ENCODE measurements at regions of chr18 and their contacts with region 1.

Region 1: DNA sequence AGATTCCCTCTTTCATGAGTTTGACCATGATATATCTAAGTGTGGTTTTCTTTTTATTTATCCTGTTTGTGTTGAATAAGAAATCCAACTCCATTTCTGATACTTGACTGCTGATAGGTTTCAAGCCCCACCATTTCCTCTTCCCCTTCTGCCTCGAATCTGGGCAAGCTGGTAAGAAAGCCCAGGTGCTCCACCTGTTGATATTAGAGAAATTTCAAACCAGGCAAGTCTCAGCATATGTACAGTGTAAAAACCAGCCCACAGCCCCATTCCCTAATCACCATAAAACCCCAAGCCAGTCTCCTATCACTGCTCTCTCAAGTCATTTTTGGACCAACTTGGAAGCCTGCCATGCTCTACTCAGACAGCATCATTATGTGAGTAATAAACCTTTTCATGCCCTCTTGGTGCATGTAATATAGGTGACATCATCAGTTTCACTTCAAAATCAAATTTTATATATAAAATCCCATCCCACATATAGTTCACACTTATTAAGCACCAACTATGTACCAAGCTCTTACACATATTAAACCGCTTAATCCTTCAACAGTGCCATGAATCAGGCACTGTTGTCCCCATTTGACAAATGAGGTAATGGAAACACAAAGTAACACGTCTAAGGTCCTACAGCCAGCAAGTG is 46.6 kb downstream of the SMAD2 start:
- DNase-seq: peak; percentile 72
- ATAC-seq: peak; percentile 97
- H3K4me3 Mint-ChIP-seq: no peak overlapping the region
- H3K27ac Mint-ChIP-seq: peak overlapping the region; percentile 84
- H3K4me1 Mint-ChIP-seq: peaks cover 47% of the 10 kb centered on the region
- H3K27me3 Mint-ChIP-seq: no peaks in the 10 kb centered on the region

Region 2: DNA sequence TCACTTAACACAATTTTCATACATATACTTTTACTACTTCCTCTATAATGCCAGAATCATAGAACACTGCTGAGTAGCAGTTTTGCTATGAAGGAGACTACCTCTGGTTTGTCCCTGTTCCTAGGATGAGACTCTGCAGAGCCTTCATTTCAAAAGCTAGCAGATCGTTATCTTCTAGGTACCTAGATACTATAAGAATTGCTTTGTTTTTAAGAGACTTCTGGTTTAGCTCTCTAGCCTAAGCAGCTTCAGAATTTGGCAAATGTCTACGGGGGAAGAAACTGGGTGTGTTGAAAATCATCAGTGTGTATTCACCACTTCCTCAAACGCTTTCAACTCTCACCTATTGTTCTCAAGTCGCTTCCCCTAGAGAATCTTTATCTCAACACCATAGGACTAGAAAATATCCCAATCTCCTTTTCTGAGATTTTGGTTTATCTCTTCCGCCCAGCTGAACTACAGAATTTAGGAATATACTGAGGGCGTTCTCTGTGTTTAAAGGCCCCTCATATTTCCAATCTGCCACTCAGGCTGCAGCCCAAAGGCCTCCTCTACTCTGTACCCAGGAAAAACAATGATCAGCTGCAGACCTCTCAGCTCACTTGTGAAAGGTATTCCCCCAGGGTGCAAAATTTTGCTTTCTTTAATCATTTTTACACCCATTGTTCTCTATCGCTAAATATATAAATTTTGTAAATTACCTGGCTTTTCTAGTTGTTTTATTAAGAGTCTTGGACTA is 17.9 kb after region 1 on chr18:
- CTCF ChIA-PET with region 1: interaction called, 5 read pairs
- POLR2A ChIA-PET with region 1: no interaction called
- intact Hi-C with region 1: loop called in 1 of 2 experiments (anchors 2 kb)
- DNase-seq: no peak
- ATAC-seq: peak; percentile 84
- H3K4me3 Mint-ChIP-seq: peak overlapping the region; percentile 55
- H3K27ac Mint-ChIP-seq: peak overlapping the region; percentile 95
- H3K4me1 Mint-ChIP-seq: peaks cover 88% of the 10 kb centered on the region
- H3K27me3 Mint-ChIP-seq: no peaks in the 10 kb centered on the region

Region 3: DNA sequence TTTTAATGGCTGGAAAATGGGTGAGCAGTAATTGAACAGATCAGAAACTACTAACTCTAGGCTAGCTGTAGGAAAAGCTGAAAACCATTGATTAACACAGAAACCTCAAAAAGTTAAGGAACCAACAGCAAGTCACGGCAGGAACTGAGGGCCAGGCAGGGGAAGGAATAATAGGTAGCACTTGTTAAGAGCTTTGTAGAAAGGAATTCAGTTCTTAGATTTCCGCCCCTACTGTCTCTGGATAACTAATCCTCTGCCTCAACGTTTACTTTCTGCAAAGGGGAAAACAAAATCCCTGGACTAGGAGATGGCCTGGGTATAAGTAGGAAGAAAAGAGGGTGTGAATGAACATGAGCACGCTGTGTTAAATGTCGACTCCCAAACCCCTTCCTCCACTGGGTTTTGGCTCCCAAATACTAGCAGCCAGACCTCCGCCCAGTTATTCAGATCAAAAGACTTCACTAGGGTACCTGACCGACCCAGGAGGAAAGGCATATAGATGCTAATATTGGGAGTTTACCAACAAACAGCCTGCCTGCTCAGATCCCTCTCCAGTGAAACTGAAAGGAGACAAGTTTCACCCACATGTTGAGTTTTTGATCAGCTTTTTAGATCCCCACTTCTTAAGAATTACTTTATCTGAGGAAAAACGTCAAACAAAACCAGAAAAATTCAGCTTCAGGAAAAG is 34.2 kb after region 1 on chr18:
- CTCF ChIA-PET with region 1: no interaction called
- POLR2A ChIA-PET with region 1: interaction called, 4 read pairs
- intact Hi-C with region 1: loop called in 1 of 2 experiments (anchors 5 kb)
- DNase-seq: peak; percentile 17
- ATAC-seq: peak; percentile 61
- H3K4me3 Mint-ChIP-seq: peak overlapping the region; percentile 71
- H3K27ac Mint-ChIP-seq: peak overlapping the region; percentile 98
- H3K4me1 Mint-ChIP-seq: peaks cover 96% of the 10 kb centered on the region
- H3K27me3 Mint-ChIP-seq: no peaks in the 10 kb centered on the region

Measured in activated CD4-positive, alpha-beta T cell treated with anti-CD3 and anti-CD28 coated beads for 36 hours (primary cell).